Activated naive CD4-positive, alpha-beta T cell treated with anti-CD3 and anti-CD28 coated beads for 36 hours (primary cell): ENCODE measurements at regions of chr14 and their contacts with region 1.

Region 1: DNA sequence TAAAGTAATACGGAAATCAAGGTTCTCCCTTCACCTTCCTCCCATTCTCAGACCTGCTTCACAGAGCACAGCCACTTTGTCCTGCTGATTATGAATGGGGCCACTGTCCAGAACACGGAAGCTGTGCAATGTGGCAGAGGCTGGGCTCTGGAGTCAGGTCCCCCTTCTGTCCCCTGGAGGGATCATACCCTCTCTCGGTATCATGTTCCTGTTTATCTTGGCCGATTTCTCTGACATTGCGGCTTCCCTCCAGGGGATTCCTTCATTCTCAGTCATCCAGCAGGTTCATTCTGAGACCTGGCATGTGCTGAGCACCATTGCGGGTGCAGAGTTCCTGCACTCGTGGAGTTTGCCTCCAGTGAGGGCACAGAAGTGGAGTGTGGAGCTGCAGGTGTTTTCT is 11.3 kb downstream of the PPP2R5C start:
- DNase-seq: no peak
- H3K4me3 Mint-ChIP-seq: no peak overlapping the region
- H3K27ac Mint-ChIP-seq: no peak overlapping the region
- H3K4me1 Mint-ChIP-seq: peaks cover 13% of the 10 kb centered on the region
- H3K27me3 Mint-ChIP-seq: no peaks in the 10 kb centered on the region

Region 2: GRCh38 chr14:100049220-100049619 is 1723.6 kb before region 1 on chr14:
- CTCF ChIA-PET with region 1: no interaction called
- intact Hi-C with region 1: no loop called
- DNase-seq: no peak
- H3K4me3 Mint-ChIP-seq: no peak overlapping the region
- H3K27ac Mint-ChIP-seq: no peak overlapping the region
- H3K4me1 Mint-ChIP-seq: peaks cover 16% of the 10 kb centered on the region
- H3K27me3 Mint-ChIP-seq: no peaks in the 10 kb centered on the region

Region 3: DNA sequence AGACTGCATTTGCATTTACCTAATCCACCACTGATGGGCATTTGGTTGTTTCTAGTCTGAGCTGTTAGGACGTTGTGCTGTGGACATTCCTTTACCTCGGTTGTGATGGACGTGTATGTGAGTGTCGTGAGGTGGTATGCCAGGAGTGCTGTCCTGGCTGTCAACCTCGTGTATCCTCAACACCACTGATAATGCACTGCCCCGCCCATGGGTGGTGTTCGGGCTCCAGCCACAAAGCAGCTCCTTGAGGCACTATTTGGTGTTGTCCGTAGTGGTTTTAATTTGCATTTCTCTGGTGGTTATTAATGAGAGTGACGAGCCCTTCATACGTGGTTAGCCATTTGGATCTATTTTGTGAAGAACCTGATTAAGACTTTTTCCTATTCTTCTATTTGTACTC is 76.3 kb after region 1 on chr14:
- CTCF ChIA-PET with region 1: interaction called, 50 read pairs
- intact Hi-C with region 1: no loop called
- DNase-seq: no peak
- H3K4me3 Mint-ChIP-seq: no peak overlapping the region
- H3K27ac Mint-ChIP-seq: no peak overlapping the region
- H3K4me1 Mint-ChIP-seq: peaks cover 87% of the 10 kb centered on the region
- H3K27me3 Mint-ChIP-seq: no peaks in the 10 kb centered on the region

Region 4: DNA sequence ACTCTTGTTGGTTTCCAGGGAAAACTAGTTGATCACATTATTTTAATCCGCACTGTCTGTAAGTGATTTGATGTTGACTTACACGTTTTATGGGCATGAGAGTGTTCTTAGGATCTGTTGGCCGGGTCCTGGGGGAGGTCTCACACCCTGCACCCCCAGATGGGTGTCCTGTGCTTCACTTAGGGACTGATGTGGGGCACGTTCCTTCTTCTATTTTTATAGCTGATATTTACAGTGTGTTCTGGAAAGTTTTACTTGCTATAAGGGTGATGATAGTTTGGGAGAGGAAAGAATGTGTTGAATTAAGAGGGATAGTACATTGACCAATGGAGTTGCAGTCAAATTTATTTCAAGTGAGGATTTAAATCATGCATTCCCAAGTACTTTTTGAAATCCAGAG is 95.0 kb after region 1 on chr14:
- CTCF ChIA-PET with region 1: interaction called, 10 read pairs
- intact Hi-C with region 1: no loop called
- DNase-seq: no peak
- H3K4me3 Mint-ChIP-seq: no peak overlapping the region
- H3K27ac Mint-ChIP-seq: no peak overlapping the region
- H3K4me1 Mint-ChIP-seq: peaks cover 40% of the 10 kb centered on the region
- H3K27me3 Mint-ChIP-seq: no peaks in the 10 kb centered on the region